ENCODE measurements at regions of chr10 and their contacts with region 1.

Region 1: GRCh38 chr10:131874991-131875451 is 25.8 kb upstream of the PPP2R2D start:
- DNase-seq: peak; percentile 93
- H3K4me3 ChIP-seq: no peak overlapping the region; a peak in 1 of 4 replicates
- H3K27ac ChIP-seq: no peak overlapping the region
- H3K4me1 ChIP-seq: no peaks in the 10 kb centered on the region; a peak in 1 of 4 replicates
- H3K27me3 ChIP-seq: no peaks in the 10 kb centered on the region
- CTCF ChIP-seq: peak; percentile 64
- EP300 ChIP-seq: no peak
- RAD21 ChIP-seq: peak; percentile 93

Region 2: GRCh38 chr10:131312478-131312836 is 562.6 kb before region 1 on chr10:
- CTCF ChIA-PET with region 1: interaction called, 10 read pairs
- POLR2A ChIA-PET with region 1: no interaction called
- DNase-seq: peak; percentile 86
- H3K4me3 ChIP-seq: peak overlapping the region in 1 of 2 experiments; percentile 26; a peak in 1 of 4 replicates
- H3K27ac ChIP-seq: no peak overlapping the region
- H3K4me1 ChIP-seq: peaks cover 0 to 22% of the 10 kb centered on the region in 2 experiments; a peak in 2 of 4 replicates
- H3K27me3 ChIP-seq: no peaks in the 10 kb centered on the region
- CTCF ChIP-seq: no peak
- EP300 ChIP-seq: no peak
- RAD21 ChIP-seq: peak; percentile 61

Region 3: DNA sequence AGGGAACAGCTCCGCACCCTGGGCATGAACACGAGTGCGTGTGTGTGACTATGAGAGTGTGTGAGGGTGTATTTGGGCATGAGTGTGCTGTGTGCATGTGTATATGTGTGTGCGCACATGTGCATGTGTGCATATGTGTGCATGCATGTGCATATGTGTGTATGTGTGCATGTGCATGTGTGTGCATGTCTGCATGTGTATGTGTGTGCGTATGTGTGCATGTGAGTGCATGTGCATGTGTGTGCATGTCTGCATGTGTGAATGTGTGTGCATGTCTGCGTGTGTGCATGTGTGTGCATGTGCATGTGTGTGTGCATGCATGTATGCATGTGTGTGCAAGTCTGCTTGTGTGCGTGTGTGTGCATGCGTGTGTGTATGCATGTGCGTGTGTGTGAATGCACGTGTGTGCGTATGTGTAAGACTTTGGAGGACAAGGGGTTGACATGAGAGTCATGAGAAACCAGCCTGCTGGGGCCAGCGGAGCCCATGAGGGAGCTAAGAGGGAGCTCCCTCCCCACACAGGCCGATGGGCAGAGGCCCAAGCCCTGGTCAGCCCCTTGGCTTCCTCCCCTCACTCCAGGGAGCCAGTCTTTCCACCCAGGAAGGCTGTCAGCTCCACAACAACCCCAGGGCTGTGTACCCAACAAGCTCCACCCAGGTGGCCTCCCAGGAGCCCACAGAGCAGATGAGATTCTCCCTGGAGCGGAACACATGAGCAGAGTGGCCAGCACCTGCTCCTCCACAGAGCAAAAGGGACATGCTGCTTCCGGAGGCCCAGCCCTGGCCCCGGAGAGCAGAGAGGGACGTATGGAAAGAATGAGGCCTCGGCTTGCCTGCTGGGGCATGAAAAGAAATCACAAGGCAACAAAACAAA is 116.7 kb before region 1 on chr10:
- CTCF ChIA-PET with region 1: no interaction called
- POLR2A ChIA-PET with region 1: no interaction called
- DNase-seq: no peak
- H3K4me3 ChIP-seq: no peak overlapping the region
- H3K27ac ChIP-seq: no peak overlapping the region
- H3K4me1 ChIP-seq: no peaks in the 10 kb centered on the region
- H3K27me3 ChIP-seq: no peaks in the 10 kb centered on the region
- CTCF ChIP-seq: no peak
- EP300 ChIP-seq: no peak
- RAD21 ChIP-seq: no peak

Region 4: GRCh38 chr10:131786756-131787605 is 88.0 kb before region 1 on chr10:
- CTCF ChIA-PET with region 1: interaction called, 16 read pairs
- POLR2A ChIA-PET with region 1: no interaction called
- DNase-seq: peak; percentile 51
- H3K4me3 ChIP-seq: no peak overlapping the region
- H3K27ac ChIP-seq: no peak overlapping the region
- H3K4me1 ChIP-seq: no peaks in the 10 kb centered on the region
- H3K27me3 ChIP-seq: no peaks in the 10 kb centered on the region
- CTCF ChIP-seq: peak; percentile 65
- EP300 ChIP-seq: no peak
- RAD21 ChIP-seq: peak; percentile 76

Region 5: GRCh38 chr10:131852823-131853609 is 22.0 kb before region 1 on chr10:
- CTCF ChIA-PET with region 1: interaction called, 12 read pairs
- POLR2A ChIA-PET with region 1: no interaction called
- DNase-seq: no peak
- H3K4me3 ChIP-seq: no peak overlapping the region
- H3K27ac ChIP-seq: no peak overlapping the region
- H3K4me1 ChIP-seq: no peaks in the 10 kb centered on the region
- H3K27me3 ChIP-seq: no peaks in the 10 kb centered on the region
- CTCF ChIP-seq: no peak
- EP300 ChIP-seq: no peak
- RAD21 ChIP-seq: no peak

Region 6: GRCh38 chr10:132142411-132143161 is 267.6 kb after region 1 on chr10:
- CTCF ChIA-PET with region 1: interaction called, 10 read pairs
- POLR2A ChIA-PET with region 1: no interaction called
- DNase-seq: peak; percentile 95
- H3K4me3 ChIP-seq: no peak overlapping the region
- H3K27ac ChIP-seq: no peak overlapping the region
- H3K4me1 ChIP-seq: no peaks in the 10 kb centered on the region; a peak in 1 of 4 replicates
- H3K27me3 ChIP-seq: no peaks in the 10 kb centered on the region
- CTCF ChIP-seq: peak; percentile 45
- EP300 ChIP-seq: no peak
- RAD21 ChIP-seq: peak; percentile 74